ENCODE measurements at regions of chr2 and their contacts with region 1.

Region 1: DNA sequence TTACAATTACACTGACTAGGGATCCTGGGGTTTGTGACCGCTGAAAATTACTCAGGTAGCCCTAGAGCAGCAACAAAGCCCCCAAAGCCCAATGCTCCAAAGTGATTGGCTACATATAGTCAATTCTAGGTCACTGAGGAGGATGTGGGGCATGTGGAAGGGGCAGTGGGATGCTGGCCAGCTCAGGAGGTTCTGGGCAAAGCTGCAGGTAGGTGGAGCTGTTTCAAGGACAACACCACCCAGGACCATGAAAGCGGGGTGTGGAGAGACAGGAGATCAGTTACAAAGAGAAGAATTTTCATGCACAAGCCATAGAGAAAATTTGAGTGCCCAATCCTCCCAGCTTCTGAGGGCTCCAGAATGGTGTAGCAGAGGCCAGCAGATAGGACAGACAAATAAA is 75.0 kb upstream of the CCDC85A start:
- DNase-seq: no peak
- H3K4me3 ChIP-seq: no peak overlapping the region
- H3K27ac ChIP-seq: no peak overlapping the region
- H3K4me1 ChIP-seq: no peaks in the 10 kb centered on the region
- H3K27me3 ChIP-seq: no peaks in the 10 kb centered on the region

Region 2: GRCh38 chr2:55824628-55825027 is 284.2 kb before region 1 on chr2:
- CTCF ChIA-PET with region 1: no interaction called
- POLR2A ChIA-PET with region 1: no interaction called
- DNase-seq: no peak
- H3K4me3 ChIP-seq: no peak overlapping the region
- H3K27ac ChIP-seq: no peak overlapping the region
- H3K4me1 ChIP-seq: no peaks in the 10 kb centered on the region
- H3K27me3 ChIP-seq: no peaks in the 10 kb centered on the region

Region 3: GRCh38 chr2:56121995-56122394 is 13.2 kb after region 1 on chr2:
- CTCF ChIA-PET with region 1: interaction called, 11 read pairs
- POLR2A ChIA-PET with region 1: no interaction called
- DNase-seq: no peak
- H3K4me3 ChIP-seq: no peak overlapping the region
- H3K27ac ChIP-seq: no peak overlapping the region
- H3K4me1 ChIP-seq: no peaks in the 10 kb centered on the region
- H3K27me3 ChIP-seq: peaks cover 0 to 3% (median 0%) of the 10 kb centered on the region in 5 experiments

Region 4: GRCh38 chr2:56199492-56199891 is 90.7 kb after region 1 on chr2:
- CTCF ChIA-PET with region 1: no interaction called
- POLR2A ChIA-PET with region 1: no interaction called
- DNase-seq: no peak
- H3K4me3 ChIP-seq: no peak overlapping the region
- H3K27ac ChIP-seq: no peak overlapping the region
- H3K4me1 ChIP-seq: peaks cover 0 to 2% (median 0%) of the 10 kb centered on the region in 4 experiments
- H3K27me3 ChIP-seq: no peaks in the 10 kb centered on the region